Activated T-helper 2 cell treated with anti-CD3 and anti-CD28 coated beads, Interferon-gamma antibody, Interleukin-2, Interleukin-4, amounts not matched to agents 10 μg/mL and 5 μg/mL and 100 μg/mL, durations not matched to agents 14 hours and 24 hours and 36 hours (primary cell): ENCODE measurements at regions of chr22 and their contacts with region 1.

Region 1: DNA sequence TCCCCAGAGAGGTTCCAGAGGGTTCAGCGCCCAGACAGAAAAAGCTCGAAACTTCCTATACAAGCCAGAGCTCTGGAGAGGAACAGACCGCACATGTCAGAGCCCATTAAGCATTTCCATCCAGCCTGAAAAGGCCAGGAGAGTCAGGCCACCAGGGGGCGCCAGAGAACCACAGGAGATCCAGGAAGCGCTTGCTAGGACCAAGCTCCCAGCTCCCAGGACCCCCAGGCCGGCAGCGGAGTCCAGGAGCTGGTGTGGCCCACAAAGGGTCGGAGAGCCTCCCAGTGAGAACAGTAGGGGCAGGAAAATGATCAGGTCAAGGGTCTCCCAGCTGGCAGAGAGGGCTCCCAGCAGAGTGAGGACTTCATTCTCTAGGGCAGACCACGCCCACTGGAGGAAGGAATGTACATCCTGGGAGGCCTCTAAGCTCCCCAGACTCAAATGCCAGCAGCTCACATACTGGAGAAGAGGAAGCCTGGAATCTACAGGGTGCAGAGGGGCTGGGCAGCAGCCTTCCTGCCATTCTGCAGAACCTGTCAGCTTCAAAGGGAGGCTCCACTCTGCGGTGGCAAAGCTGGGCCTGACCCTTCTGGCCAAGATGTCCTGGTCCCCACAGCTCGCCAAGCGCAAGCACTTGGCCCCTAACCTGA is 2.1 kb upstream of the MEI1 start:
- DNase-seq: peak; percentile 81
- H3K4me3 Mint-ChIP-seq: no peak overlapping the region
- H3K27ac Mint-ChIP-seq: peak overlapping the region; percentile 69
- H3K4me1 Mint-ChIP-seq: peaks cover 11% of the 10 kb centered on the region
- H3K27me3 Mint-ChIP-seq: peaks cover 2% of the 10 kb centered on the region

Region 2: DNA sequence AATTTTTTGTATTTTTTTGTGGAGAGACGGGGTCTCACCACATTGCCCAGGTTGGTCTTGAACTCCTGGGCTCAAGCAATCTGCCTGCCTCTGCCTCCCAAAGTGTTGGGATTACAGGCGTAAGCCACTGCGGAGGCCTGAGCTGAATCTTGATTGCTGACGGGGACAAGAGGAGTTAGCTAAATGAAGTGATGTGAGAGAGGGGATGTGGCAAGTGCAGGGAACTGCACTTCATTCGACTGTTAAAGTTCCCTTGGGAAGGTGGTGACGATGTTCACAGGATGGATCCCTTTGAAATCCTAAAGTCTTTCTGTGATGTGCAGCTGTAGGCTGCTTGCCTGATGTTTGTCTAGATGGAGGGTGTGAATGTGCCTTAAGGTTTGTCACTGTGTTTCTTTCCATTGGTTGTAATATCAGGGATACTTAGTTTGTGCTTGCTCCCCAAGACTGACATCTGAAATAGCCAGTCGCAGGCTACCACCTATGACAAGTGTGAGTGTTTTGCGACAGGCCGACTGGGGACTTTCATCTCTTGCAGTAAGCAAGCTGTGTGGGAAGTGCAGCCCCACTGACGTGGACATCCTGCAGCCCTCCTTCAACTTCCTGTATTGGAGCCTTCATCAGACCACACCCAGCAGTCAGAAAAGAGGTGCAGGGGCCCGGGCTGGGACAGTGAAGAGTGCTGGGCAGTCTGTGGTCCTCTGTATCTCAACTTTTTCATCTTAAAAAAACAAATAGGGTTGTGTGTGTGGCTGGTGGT is 83.7 kb after region 1 on chr22:
- intact Hi-C with region 1: loop called (anchors 5 kb)
- DNase-seq: peak; percentile 94
- H3K4me3 Mint-ChIP-seq: peak overlapping the region; percentile 89
- H3K27ac Mint-ChIP-seq: peak overlapping the region; percentile 96
- H3K4me1 Mint-ChIP-seq: peaks cover 31% of the 10 kb centered on the region
- H3K27me3 Mint-ChIP-seq: no peaks in the 10 kb centered on the region

Region 3: DNA sequence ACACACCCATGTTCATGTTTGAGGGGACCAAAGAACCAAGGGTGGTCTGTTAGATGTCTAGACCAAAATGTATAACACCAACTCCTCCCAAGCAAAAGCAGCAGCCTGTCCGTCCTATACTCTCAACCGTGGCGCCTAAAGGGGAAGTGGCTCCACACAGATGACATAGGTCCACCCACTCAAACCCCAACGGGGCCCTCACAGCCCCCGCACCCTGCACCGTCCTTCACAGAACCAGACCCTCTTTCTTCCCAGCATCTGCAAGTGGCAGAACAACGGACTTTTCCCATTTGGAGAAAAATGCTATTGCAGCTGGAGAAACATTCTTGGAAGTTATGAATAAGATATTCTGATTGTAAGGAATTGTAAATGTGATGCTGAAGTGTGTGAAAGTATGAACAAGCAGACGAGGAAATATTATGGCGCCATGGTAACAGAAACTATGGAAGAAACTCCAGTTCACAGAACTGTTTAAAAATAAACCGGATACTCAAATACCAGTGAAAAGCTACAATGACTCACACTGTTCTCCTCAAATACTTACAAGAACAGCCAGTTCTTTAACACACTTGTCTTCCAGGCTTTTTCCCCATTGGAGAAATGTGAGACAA is 1236.3 kb after region 1 on chr22:
- intact Hi-C with region 1: no loop called
- DNase-seq: no peak
- H3K4me3 Mint-ChIP-seq: peak overlapping the region; percentile 37
- H3K27ac Mint-ChIP-seq: peak overlapping the region; percentile 83
- H3K4me1 Mint-ChIP-seq: peaks cover 50% of the 10 kb centered on the region
- H3K27me3 Mint-ChIP-seq: no peaks in the 10 kb centered on the region